ENCODE measurements at regions of chr16 and their contacts with region 1.

Region 1: GRCh38 chr16:18969050-18969854 is 14.5 kb upstream of the TMC7 start:
- DNase-seq: peak; percentile 80
- ATAC-seq: peak; percentile 85
- H3K4me3 ChIP-seq: peak overlapping the region in 4 of 5 experiments; percentile 19 to 49 (median 37)
- H3K4me3 Mint-ChIP-seq: peak overlapping the region; percentile 5
- H3K27ac ChIP-seq: no peak overlapping the region
- H3K27ac Mint-ChIP-seq: no peak overlapping the region
- H3K4me1 ChIP-seq: peaks cover 4 to 5% of the 10 kb centered on the region in 2 donors
- H3K4me1 Mint-ChIP-seq: peaks cover 3% of the 10 kb centered on the region
- H3K27me3 ChIP-seq: peaks cover 0 to 3% (median 0%) of the 10 kb centered on the region in 4 experiments
- H3K27me3 Mint-ChIP-seq: no peaks in the 10 kb centered on the region
- CTCF ChIP-seq: peak; percentile 96

Region 2: DNA sequence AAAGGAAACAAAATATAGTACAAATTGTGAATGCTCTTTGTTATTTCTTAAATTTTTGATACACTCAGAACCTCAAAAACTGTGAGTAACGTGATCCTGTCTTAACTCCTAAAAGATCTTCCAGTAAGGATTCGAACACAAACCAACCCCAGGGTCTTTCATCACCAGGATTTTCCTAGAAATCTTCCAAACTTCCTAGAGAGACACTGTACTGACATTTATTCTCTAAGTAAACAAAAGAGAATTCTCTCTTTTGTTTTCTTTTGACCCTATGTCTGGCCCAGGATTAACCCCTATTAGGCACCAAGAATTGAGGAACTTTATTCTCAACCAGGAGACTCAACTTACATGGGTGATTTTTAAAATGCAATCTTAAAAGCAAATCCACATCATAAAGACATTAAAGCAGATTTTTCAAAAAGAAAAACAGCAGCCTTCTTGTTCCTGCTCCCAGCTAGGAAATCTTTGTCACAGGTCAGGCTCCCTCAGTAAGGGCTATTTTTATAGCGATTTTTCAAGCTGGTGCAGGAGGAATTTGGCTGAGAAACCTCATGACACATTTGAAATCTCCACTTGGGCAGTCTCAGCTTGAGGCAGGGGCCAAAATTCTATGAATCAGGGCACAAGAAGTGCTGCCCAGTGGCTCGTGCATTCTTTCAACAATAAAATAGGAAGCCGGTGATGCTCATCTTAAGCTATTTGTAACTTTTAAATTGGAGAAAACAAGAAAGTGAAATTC is 36.8 kb before region 1 on chr16:
- CTCF ChIA-PET with region 1: no interaction called
- POLR2A ChIA-PET with region 1: no interaction called
- intact Hi-C with region 1: loop called (anchors 5 kb)
- DNase-seq: no peak
- ATAC-seq: no peak
- H3K4me3 ChIP-seq: no peak overlapping the region
- H3K4me3 Mint-ChIP-seq: peak overlapping the region; percentile 26
- H3K27ac ChIP-seq: peak overlapping the region in 1 of 2 donors; percentile 63
- H3K27ac Mint-ChIP-seq: peak overlapping the region; percentile 69
- H3K4me1 ChIP-seq: peaks cover 0 to 3% of the 10 kb centered on the region in 2 donors
- H3K4me1 Mint-ChIP-seq: peaks cover 19% of the 10 kb centered on the region
- H3K27me3 ChIP-seq: no peaks in the 10 kb centered on the region
- H3K27me3 Mint-ChIP-seq: peaks cover under 1% of the 10 kb centered on the region
- CTCF ChIP-seq: no peak

Region 3: DNA sequence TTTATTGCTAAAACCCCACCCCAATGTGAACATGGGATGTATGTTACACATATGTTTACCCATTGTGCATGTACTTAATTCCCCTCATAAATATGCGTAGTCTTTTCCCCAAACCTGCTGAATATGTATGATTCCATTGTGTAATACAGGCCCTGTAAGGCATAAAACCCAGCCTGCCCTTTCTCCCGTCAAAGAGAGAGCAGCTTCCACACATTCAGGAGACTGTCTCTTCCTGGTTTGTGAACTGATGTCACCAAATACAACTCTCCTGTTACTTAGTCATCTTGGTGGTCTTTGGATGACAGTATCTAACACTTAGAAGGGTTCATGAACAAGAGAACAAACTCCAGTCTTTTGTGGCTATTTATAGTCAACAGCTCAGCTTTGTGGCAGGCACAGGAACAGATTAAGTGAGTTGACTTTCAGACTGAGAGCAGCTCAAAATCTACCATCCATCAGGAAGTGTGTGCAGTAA is 10.2 kb before region 1 on chr16:
- CTCF ChIA-PET with region 1: interaction called, 13 read pairs
- POLR2A ChIA-PET with region 1: no interaction called
- intact Hi-C with region 1: no loop called
- DNase-seq: no peak
- ATAC-seq: no peak
- H3K4me3 ChIP-seq: no peak overlapping the region
- H3K4me3 Mint-ChIP-seq: no peak overlapping the region
- H3K27ac ChIP-seq: no peak overlapping the region
- H3K27ac Mint-ChIP-seq: no peak overlapping the region
- H3K4me1 ChIP-seq: peaks cover 0 to 3% of the 10 kb centered on the region in 2 donors
- H3K4me1 Mint-ChIP-seq: peaks cover 4% of the 10 kb centered on the region
- H3K27me3 ChIP-seq: no peaks in the 10 kb centered on the region
- H3K27me3 Mint-ChIP-seq: peaks cover 9% of the 10 kb centered on the region
- CTCF ChIP-seq: no peak

Region 4: DNA sequence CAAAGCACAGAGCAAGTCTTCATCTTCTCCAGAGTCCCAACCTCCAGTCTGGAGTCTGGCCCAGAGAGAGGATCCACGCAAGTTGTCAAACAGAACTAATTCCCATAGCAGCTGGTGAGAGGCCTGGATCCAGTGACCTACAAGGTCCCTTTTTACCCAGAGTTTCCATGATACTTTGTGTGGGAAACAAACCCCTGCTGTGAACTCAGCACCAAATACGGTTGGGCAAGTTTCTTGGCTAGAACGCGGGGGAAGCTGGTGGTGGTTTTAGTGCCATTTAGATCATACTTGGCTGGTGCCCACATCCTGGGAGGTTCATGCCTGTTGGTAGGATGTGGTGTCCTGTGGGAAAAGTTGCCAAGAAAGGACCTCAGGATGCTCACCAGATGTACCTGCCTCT is 32.5 kb after region 1 on chr16:
- CTCF ChIA-PET with region 1: no interaction called
- POLR2A ChIA-PET with region 1: no interaction called
- intact Hi-C with region 1: no loop called
- DNase-seq: no peak
- ATAC-seq: no peak
- H3K4me3 ChIP-seq: no peak overlapping the region
- H3K4me3 Mint-ChIP-seq: no peak overlapping the region
- H3K27ac ChIP-seq: no peak overlapping the region
- H3K27ac Mint-ChIP-seq: no peak overlapping the region
- H3K4me1 ChIP-seq: no peaks in the 10 kb centered on the region
- H3K4me1 Mint-ChIP-seq: no peaks in the 10 kb centered on the region
- H3K27me3 ChIP-seq: no peaks in the 10 kb centered on the region
- H3K27me3 Mint-ChIP-seq: peaks cover 4% of the 10 kb centered on the region
- CTCF ChIP-seq: no peak

Region 5: GRCh38 chr16:19014461-19014860 is 45.2 kb after region 1 on chr16:
- CTCF ChIA-PET with region 1: no interaction called
- POLR2A ChIA-PET with region 1: no interaction called
- intact Hi-C with region 1: no loop called
- DNase-seq: no peak
- ATAC-seq: no peak
- H3K4me3 ChIP-seq: no peak overlapping the region
- H3K4me3 Mint-ChIP-seq: no peak overlapping the region
- H3K27ac ChIP-seq: no peak overlapping the region
- H3K27ac Mint-ChIP-seq: no peak overlapping the region
- H3K4me1 ChIP-seq: no peaks in the 10 kb centered on the region
- H3K4me1 Mint-ChIP-seq: no peaks in the 10 kb centered on the region
- H3K27me3 ChIP-seq: no peaks in the 10 kb centered on the region
- H3K27me3 Mint-ChIP-seq: peaks cover 6% of the 10 kb centered on the region
- CTCF ChIP-seq: no peak

Region 6: DNA sequence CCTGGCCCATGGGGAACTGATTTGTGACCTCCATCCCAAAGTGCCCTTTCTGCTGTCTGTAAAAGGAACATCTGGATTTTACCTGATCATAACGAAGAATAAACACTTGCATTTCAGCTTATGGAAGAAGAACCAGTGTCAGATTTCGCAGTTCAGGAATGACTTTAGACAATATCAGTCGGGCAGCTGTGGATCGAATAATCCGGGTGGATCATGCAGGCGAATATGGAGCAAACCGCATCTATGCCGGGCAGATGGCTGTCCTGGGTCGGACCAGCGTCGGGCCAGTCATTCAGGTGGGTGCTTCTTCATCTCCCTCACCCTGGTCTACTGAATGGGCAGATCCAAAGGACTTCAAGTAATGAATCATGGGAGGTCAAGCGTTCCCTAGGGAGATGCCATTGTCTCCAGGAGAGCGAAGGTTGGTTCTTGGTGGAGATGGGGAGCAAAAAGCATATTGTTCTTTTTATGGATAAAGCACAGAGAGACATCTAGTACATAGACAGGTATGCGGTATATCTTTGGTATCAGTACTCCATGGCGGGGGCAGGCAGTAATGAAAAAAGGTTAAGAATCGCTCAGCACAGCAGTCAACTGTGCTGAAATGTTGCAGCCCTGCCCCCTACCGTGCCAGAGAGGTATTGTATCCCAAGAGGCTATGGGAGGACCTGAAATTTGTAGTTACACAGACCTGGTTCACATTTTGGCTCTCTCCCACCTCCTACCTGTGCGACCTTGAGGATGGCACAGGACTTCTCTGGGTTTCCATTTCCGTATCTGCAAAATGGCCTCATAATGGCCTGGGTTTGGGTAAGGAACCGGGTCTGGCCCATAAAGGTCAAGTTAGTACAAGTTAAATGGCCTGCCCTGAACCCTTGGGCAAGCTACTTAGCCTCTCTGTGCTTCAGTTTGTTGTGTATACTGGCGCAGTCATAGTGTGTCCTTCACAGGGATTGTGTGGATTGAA is 102.8 kb after region 1 on chr16:
- CTCF ChIA-PET with region 1: no interaction called
- POLR2A ChIA-PET with region 1: no interaction called
- intact Hi-C with region 1: no loop called
- DNase-seq: peak; percentile 65
- ATAC-seq: no peak
- H3K4me3 ChIP-seq: no peak overlapping the region
- H3K4me3 Mint-ChIP-seq: no peak overlapping the region
- H3K27ac ChIP-seq: no peak overlapping the region
- H3K27ac Mint-ChIP-seq: no peak overlapping the region
- H3K4me1 ChIP-seq: peaks cover 8 to 10% of the 10 kb centered on the region in 2 donors
- H3K4me1 Mint-ChIP-seq: peaks cover 12% of the 10 kb centered on the region
- H3K27me3 ChIP-seq: no peaks in the 10 kb centered on the region
- H3K27me3 Mint-ChIP-seq: no peaks in the 10 kb centered on the region
- CTCF ChIP-seq: peak; percentile 70

Measured in B cell (primary cell).